ENCODE measurements at regions of chr11 and their contacts with region 1.

Region 1: GRCh38 chr11:4018666-4019065 is 75.9 kb upstream of the RRM1 start:
- DNase-seq: no peak
- ATAC-seq: no peak
- H3K4me3 ChIP-seq: no peak overlapping the region
- H3K27ac ChIP-seq: no peak overlapping the region
- H3K4me1 ChIP-seq: no peaks in the 10 kb centered on the region
- H3K27me3 ChIP-seq: no peaks in the 10 kb centered on the region
- CTCF ChIP-seq: no peak

Region 2: GRCh38 chr11:3959015-3959919 is 59.4 kb before region 1 on chr11:
- CTCF ChIA-PET with region 1: no interaction called
- POLR2A ChIA-PET with region 1: no interaction called
- intact Hi-C with region 1: no loop called
- DNase-seq: peak; percentile 60
- ATAC-seq: peak; percentile 33
- H3K4me3 ChIP-seq: no peak overlapping the region
- H3K27ac ChIP-seq: no peak overlapping the region
- H3K4me1 ChIP-seq: peaks cover 31% of the 10 kb centered on the region
- H3K27me3 ChIP-seq: no peaks in the 10 kb centered on the region
- CTCF ChIP-seq: peak; percentile 61

Region 3: DNA sequence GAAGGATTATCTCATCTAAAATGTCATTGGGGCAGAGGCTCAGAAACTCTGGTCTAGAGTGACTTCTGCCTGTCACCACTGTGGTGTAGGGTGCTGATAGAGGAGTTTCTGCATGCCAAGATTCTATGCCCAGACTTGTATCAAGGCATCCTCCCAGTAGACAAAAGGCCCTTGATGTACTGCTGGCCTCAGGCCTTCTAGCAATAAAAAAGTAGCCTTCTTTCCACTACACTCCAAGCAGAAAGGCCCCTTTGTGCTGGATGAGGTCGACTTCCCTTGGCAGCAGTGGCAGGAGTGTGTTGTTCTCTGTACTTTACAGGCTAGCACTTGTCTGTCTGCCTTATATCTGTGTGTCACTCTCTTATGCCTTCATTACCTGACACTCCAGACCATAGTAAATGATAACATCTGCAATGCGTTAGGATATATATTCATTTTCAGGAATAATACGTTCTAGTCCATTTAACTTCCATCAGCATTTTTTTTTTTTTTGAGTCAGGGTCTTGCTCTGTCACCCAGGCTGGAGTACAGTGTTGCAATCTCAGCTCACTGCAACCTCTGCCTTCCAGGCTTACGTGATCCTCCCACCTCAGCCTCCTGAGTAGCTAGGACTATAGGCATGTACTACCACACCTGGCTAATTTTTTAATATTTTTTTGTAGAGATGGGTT is 26.4 kb after region 1 on chr11:
- CTCF ChIA-PET with region 1: no interaction called
- POLR2A ChIA-PET with region 1: interaction called, 20 read pairs
- intact Hi-C with region 1: no loop called
- DNase-seq: no peak
- ATAC-seq: peak; percentile 61
- H3K4me3 ChIP-seq: no peak overlapping the region
- H3K27ac ChIP-seq: no peak overlapping the region
- H3K4me1 ChIP-seq: no peaks in the 10 kb centered on the region
- H3K27me3 ChIP-seq: no peaks in the 10 kb centered on the region
- CTCF ChIP-seq: no peak